ENCODE measurements at regions of chr18 and their contacts with region 1.

Region 1: DNA sequence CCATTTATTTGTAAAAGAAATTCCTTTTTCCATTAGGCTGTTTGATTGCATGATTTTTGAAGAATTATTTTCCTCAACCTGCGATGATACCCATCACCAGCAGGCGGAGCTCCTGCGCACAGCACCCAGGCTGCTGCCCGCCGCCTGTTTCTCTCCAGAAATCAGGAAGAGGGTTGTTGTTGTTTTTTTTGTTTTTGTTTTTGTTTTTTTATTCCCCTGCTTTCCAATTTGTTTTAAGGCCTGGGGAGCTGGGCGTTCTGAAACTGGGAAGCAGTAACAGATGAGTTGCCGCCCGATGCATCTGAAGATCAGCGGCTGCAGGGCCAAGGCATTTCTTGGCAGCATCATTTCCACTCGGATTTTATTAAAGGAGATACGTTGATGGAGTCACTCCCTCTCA is 132.1 kb downstream of the MBP start:
- DNase-seq: peak; percentile 51 to 66
- H3K4me3 ChIP-seq: no peak overlapping the region
- H3K27ac ChIP-seq: no peak overlapping the region
- H3K4me1 ChIP-seq: peaks cover 0 to 1% of the 10 kb centered on the region in 2 donors
- H3K27me3 ChIP-seq: no peaks in the 10 kb centered on the region
- CTCF ChIP-seq: peak; percentile 90 to 98 (median 93)
- POLR2A ChIP-seq: no peak

Region 2: DNA sequence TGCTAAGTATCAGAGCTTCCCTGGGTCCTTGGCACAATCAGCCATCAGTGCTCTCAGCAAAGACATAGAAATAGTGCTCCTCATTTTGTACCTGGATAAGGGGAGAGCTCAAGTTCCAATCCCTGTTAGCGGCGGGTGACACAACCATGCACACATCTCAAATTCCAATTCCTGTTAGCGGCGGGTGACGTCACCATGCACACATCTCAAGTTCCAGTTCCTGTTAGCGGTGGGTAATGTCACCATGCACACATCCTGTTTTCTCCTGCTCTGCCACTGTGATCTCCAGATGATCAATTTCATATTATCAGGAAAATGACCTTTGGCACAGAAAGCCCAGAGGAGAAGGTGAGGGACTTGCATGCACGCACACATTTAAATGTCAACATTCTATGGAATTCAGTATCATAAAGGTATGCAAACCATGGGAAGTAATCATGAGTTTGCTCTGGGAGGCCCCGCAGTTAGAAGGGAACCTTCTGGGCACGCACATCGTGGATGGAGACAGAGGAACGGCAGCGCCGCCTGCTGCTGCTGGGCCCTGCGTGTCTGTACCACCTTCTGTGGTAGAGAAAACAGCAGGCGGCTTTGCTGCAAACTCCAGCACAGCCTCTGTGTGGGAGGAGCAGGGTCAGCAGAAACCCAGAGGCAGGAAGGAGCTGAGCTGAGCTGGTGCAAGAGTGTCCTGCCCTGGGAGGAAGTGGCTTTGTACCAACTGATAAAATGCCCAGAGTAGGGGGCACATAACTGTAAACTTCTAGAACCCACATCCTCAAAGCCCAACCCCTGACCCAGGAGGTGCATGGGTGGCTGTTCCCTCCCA is 54.3 kb after region 1 on chr18:
- intact Hi-C with region 1: loop called (anchors 5 kb)
- DNase-seq: peak; percentile 47 to 48
- H3K4me3 ChIP-seq: no peak overlapping the region
- H3K27ac ChIP-seq: peak overlapping the region in 2 of 3 donors; percentile 62 to 78
- H3K4me1 ChIP-seq: peaks cover 40 to 45% of the 10 kb centered on the region in 2 donors
- H3K27me3 ChIP-seq: no peaks in the 10 kb centered on the region
- CTCF ChIP-seq: peak in 4 of 6 experiments; percentile 30 to 38 (median 34)
- POLR2A ChIP-seq: no peak

Region 3: DNA sequence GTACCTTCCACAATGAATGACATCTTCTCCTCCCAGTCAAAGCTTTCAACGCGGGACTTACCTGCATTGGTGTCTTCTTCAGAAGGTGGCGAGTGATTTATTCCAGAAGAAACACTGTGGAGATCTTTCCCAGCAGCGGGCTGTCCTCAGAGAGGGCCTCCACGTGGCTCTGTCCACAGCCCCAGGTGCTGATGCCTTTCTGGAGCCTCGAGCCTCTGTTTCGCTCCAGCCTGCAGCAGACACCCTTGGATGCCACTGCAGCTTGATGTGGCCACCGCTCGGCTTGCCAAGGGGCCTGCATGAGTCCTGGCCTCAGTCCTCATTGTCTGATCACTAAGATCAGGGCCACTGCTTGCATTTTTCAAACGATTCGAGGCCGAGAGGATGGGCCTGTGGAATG is 202.5 kb after region 1 on chr18:
- intact Hi-C with region 1: loop called (anchors 5 kb)
- DNase-seq: peak in 1 of 2 donors; percentile 12
- H3K4me3 ChIP-seq: no peak overlapping the region
- H3K27ac ChIP-seq: no peak overlapping the region
- H3K4me1 ChIP-seq: peaks cover 35 to 41% of the 10 kb centered on the region in 2 donors
- H3K27me3 ChIP-seq: no peaks in the 10 kb centered on the region
- CTCF ChIP-seq: no peak
- POLR2A ChIP-seq: no peak

Region 4: GRCh38 chr18:77210249-77210648 is 209.7 kb after region 1 on chr18:
- intact Hi-C with region 1: loop called (anchors 5 kb)
- DNase-seq: no peak
- H3K4me3 ChIP-seq: no peak overlapping the region
- H3K27ac ChIP-seq: no peak overlapping the region
- H3K4me1 ChIP-seq: peaks cover 24 to 33% of the 10 kb centered on the region in 2 donors
- H3K27me3 ChIP-seq: no peaks in the 10 kb centered on the region
- CTCF ChIP-seq: no peak
- POLR2A ChIP-seq: no peak

Measured in thyroid gland (tissue), 4 donors.